A549 (cell line): ENCODE measurements at regions of chr11 and their contacts with region 1.

Region 1: DNA sequence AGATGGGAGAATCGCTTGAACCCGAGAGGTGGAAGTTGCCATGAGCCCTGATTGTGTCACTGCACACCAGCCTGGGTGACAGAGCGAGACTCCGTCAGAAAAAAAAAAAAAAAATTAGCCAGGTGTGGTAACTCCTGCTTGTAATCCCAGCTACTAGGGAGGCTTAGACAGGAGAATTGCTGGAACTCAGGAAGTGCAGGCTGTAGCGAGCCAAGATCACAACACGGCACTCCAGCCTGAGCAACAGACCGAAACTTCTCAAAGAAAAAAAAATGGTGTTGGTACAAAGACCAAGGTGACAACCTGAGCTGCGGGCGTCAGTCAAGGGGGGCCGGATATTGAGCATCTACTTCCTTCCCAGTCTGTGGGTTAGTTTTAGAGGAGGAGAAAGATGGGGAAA is 48.4 kb upstream of the HSPA8 start:
- DNase-seq: no peak
- ATAC-seq: no peak
- H3K4me3 ChIP-seq: no peak overlapping the region
- H3K27ac ChIP-seq: no peak overlapping the region
- H3K4me1 ChIP-seq: peaks cover 8% of the 10 kb centered on the region; the same call in 2 of the 3 replicates
- CTCF ChIP-seq: no peak
- EP300 ChIP-seq: no peak
- POLR2A ChIP-seq: no peak
- RAD21 ChIP-seq: no peak

Region 2: DNA sequence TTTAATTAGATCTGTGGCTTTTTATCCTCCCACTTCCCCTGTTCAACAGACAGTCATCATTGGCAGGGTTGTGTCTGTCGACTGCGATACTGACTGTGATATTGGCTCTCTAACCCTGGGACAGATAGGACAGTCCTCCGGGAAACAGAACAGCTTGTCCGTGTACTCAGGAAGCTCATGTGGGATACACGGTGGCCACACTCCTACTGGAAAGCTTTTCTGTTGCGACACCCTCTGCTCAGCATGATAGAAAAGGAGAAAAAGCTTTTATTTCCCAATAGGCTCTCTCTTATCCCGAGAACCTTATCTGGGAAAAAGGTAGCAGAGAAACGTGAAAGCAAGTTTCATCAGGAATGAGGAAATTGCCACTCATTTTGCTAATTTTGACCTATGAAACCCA is 12.0 kb after region 1 on chr11:
- CTCF ChIA-PET with region 1: interaction called, 15 read pairs
- POLR2A ChIA-PET with region 1: no interaction called
- DNase-seq: peak in 1 of 2 experiments; percentile 50
- ATAC-seq: peak; percentile 70 to 74; a peak in 4 of 6 replicates
- H3K4me3 ChIP-seq: no peak overlapping the region
- H3K27ac ChIP-seq: peak overlapping the region; percentile 77 to 78
- H3K4me1 ChIP-seq: peaks cover 31% of the 10 kb centered on the region
- CTCF ChIP-seq: no peak
- EP300 ChIP-seq: no peak
- POLR2A ChIP-seq: no peak
- RAD21 ChIP-seq: no peak

Region 3: DNA sequence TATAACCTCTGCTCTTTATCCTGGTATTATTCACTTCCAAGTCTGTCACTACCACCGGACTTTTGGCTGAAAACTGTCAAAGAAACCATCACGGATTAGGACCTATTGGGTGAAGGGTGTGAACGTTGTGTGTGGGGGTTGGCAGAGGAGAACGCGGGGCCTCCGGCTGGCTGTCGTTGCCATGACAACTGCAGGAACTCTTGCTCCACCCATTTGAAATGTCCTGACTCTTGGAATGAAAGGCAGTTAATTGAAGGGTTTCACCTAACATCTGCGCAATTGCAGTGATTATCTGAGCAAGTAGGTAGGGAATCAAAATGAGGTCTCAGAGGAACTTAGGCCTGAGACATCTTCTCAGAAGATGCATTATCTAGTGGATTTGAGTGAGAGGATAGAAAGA is 145.6 kb after region 1 on chr11:
- CTCF ChIA-PET with region 1: interaction called, 57 read pairs
- POLR2A ChIA-PET with region 1: no interaction called
- DNase-seq: no peak
- ATAC-seq: no peak
- H3K4me3 ChIP-seq: no peak overlapping the region
- H3K27ac ChIP-seq: no peak overlapping the region
- H3K4me1 ChIP-seq: peaks cover 8% of the 10 kb centered on the region; the same call in 2 of the 3 replicates
- CTCF ChIP-seq: no peak
- EP300 ChIP-seq: no peak
- POLR2A ChIP-seq: no peak
- RAD21 ChIP-seq: no peak

Region 4: DNA sequence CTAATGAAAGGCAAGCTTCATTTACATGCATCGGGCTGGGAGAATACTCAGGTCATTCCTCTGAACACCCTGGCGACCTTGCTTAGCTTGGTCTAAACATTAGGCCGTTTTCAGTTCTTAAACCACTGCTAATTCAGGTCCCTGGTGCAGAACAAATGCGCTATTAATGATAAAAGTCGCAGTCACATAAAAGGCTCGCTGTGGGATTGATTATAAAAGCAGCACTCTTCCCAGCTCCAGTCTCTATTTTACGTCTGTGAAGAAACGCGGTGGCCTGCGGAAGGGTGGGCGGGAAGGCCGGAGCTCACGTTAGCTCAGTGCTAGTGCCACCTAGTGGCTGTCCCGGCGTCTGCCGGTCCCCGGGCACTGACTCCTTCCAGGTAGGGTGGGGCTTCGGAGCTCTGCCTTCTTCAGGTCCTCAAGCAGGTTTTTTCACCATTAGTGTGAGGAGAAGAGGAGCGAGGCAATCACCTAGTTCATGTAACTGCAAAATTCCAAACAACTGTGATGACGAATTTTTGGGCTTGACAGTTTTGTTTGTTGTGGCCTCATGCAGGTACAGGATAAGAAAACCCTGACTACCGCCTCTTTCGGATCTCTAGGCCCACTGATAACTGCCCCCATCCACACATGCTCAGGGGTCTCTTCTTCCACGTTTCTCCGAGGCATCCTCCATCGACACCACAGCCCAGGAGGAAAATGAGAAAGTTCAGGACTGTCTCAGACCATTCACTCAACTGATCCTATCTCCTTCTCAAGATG is 151.2 kb after region 1 on chr11:
- CTCF ChIA-PET with region 1: interaction called, 57 read pairs
- POLR2A ChIA-PET with region 1: no interaction called
- DNase-seq: peak; percentile 71 to 73
- ATAC-seq: peak; percentile 96 to 99
- H3K4me3 ChIP-seq: peak overlapping the region; percentile 30
- H3K27ac ChIP-seq: peak overlapping the region; percentile 61 to 79; a peak in 4 of 6 replicates
- H3K4me1 ChIP-seq: no peaks in the 10 kb centered on the region
- CTCF ChIP-seq: peak; percentile 82
- EP300 ChIP-seq: no peak
- POLR2A ChIP-seq: no peak
- RAD21 ChIP-seq: peak; percentile 79 to 83